CD4-positive, alpha-beta T cell (primary cell): ENCODE measurements at regions of chr5 and their contacts with region 1.

Region 1: GRCh38 chr5:81506900-81507588 is 113.1 kb upstream of the ACOT12 start:
- DNase-seq: peak in 10 of 14 experiments; percentile 1 to 75 (median 20)
- ATAC-seq: peak; percentile 89
- H3K4me3 ChIP-seq: no peak overlapping the region
- H3K4me3 Mint-ChIP-seq: no peak overlapping the region
- H3K27ac ChIP-seq: no peak overlapping the region
- H3K27ac Mint-ChIP-seq: no peak overlapping the region
- H3K4me1 ChIP-seq: no peaks in the 10 kb centered on the region
- H3K4me1 Mint-ChIP-seq: peaks cover 7% of the 10 kb centered on the region
- H3K27me3 ChIP-seq: no peaks in the 10 kb centered on the region
- H3K27me3 Mint-ChIP-seq: no peaks in the 10 kb centered on the region
- CTCF ChIP-seq: peak; percentile 71

Region 2: DNA sequence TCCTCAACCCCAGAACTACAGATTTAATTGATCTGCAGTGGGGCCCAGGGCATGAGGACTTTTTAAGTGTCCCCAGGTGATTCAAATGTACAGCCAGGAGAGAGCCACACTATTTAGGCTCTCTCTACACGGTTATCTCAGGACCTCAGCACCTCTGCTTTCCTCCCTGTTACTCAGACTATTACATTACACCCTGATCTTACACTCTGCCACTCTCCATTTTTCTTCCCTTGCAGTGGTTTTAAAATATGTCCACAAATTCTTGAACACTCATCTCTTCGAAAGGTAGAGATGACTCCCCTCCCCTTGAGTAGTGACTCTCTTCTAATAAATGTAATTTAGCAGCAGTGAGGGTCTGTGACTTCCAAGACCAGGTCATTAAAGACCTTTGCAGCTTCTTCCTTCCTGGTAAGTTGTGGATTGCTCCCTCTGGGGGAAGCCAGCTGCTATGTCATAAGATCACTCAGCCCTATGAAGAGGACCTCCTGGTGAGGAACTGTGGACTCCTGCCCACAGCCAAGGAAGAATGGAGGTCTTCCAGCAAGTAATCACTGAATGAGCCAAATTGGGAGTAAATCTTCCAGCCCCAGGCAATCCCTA is 331.4 kb after region 1 on chr5:
- CTCF ChIA-PET with region 1: interaction called, 7 read pairs
- POLR2A ChIA-PET with region 1: no interaction called
- intact Hi-C with region 1: loop called (anchors 1 to 2 kb)
- DNase-seq: peak in 8 of 14 experiments; percentile 15 to 71 (median 40)
- ATAC-seq: peak; percentile 94
- H3K4me3 ChIP-seq: no peak overlapping the region
- H3K4me3 Mint-ChIP-seq: no peak overlapping the region
- H3K27ac ChIP-seq: no peak overlapping the region
- H3K27ac Mint-ChIP-seq: no peak overlapping the region
- H3K4me1 ChIP-seq: peaks cover 8% of the 10 kb centered on the region
- H3K4me1 Mint-ChIP-seq: peaks cover 9% of the 10 kb centered on the region
- H3K27me3 ChIP-seq: no peaks in the 10 kb centered on the region
- H3K27me3 Mint-ChIP-seq: no peaks in the 10 kb centered on the region
- CTCF ChIP-seq: peak; percentile 76

Region 3: DNA sequence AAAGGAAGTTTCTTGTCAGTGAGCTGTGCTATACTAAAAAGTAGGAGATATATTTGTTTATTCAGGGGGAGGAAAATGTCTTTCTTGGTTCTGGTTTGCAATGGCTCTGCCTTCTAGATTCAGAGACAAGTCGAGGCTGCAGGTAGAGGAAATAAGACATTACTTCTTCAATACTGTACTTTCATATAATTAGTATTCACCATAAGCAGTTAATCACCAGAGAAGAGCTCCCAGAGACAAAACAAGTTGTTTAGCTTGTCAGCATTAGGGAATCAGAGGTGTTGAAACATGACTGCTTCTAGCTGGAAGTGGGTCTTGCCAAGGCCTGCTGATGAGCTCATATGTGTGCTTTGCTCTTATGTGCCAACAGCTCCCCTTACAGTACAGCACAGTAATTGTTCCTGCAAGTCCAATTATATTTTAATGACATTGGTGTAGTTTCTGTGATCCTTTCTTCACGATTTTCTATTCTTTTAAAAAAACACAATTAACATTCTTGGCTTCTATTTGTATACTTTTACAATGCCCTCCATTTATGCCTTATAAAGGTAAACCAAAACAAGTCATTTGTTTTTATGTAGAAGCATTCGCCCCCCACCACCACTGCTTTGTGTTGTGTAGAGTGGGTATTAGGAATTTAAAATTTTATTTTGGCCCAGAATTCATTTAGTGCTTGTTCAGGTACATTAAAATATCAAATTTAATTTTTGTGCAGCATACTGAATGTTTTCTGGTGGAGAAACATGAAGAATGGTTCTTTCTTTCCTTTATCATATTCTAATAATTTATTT is 658.9 kb after region 1 on chr5:
- CTCF ChIA-PET with region 1: interaction called, 3 read pairs
- POLR2A ChIA-PET with region 1: interaction called, 5 read pairs
- intact Hi-C with region 1: loop called (anchors 1 to 2 kb)
- DNase-seq: peak in 11 of 14 experiments; percentile 2 to 78 (median 29)
- ATAC-seq: peak; percentile 100
- H3K4me3 ChIP-seq: no peak overlapping the region
- H3K4me3 Mint-ChIP-seq: no peak overlapping the region
- H3K27ac ChIP-seq: no peak overlapping the region
- H3K27ac Mint-ChIP-seq: peak overlapping the region; percentile 43
- H3K4me1 ChIP-seq: no peaks in the 10 kb centered on the region
- H3K4me1 Mint-ChIP-seq: peaks cover 12% of the 10 kb centered on the region
- H3K27me3 ChIP-seq: no peaks in the 10 kb centered on the region
- H3K27me3 Mint-ChIP-seq: no peaks in the 10 kb centered on the region
- CTCF ChIP-seq: peak; percentile 79

Region 4: DNA sequence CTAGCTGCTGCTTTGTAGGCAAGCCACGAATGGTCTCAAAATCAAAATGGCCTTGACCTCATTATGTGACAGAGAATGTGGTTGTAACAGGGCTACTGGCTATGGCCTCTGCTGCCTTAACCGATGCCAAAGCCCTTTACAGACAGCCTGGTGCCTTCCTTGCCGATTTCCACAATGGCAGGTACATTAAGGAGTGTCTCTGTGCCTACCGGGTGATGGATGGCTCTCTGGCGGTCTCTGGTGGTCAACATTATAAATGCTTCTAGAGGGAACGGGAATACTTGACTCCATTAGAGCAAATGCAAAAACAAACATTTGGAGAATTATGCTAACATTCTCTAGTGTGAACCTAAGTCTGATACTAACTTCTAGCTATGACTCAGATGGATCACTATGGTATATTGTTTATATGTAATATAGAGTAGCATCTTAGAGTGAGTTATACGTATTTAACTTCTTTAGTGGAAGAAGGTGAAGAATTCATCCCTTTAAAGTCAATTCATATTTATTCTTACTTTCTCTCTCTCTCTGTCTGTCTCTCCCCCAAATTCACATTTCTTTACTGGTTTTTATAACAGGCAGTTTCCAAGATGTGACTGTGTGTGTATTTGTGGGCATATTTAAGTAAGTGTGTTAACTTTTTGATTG is 718.6 kb after region 1 on chr5:
- CTCF ChIA-PET with region 1: no interaction called
- POLR2A ChIA-PET with region 1: no interaction called
- intact Hi-C with region 1: loop called (anchors 1 to 5 kb)
- DNase-seq: peak; percentile 31 to 79 (median 52)
- ATAC-seq: peak; percentile 89
- H3K4me3 ChIP-seq: no peak overlapping the region
- H3K4me3 Mint-ChIP-seq: no peak overlapping the region
- H3K27ac ChIP-seq: no peak overlapping the region
- H3K27ac Mint-ChIP-seq: no peak overlapping the region
- H3K4me1 ChIP-seq: peaks cover 3% of the 10 kb centered on the region
- H3K4me1 Mint-ChIP-seq: peaks cover 5% of the 10 kb centered on the region
- H3K27me3 ChIP-seq: no peaks in the 10 kb centered on the region
- H3K27me3 Mint-ChIP-seq: no peaks in the 10 kb centered on the region
- CTCF ChIP-seq: peak; percentile 76